Right cardiac atrium (tissue), 5 donors: ENCODE measurements at regions of chr22 and their contacts with region 1.

Region 1: DNA sequence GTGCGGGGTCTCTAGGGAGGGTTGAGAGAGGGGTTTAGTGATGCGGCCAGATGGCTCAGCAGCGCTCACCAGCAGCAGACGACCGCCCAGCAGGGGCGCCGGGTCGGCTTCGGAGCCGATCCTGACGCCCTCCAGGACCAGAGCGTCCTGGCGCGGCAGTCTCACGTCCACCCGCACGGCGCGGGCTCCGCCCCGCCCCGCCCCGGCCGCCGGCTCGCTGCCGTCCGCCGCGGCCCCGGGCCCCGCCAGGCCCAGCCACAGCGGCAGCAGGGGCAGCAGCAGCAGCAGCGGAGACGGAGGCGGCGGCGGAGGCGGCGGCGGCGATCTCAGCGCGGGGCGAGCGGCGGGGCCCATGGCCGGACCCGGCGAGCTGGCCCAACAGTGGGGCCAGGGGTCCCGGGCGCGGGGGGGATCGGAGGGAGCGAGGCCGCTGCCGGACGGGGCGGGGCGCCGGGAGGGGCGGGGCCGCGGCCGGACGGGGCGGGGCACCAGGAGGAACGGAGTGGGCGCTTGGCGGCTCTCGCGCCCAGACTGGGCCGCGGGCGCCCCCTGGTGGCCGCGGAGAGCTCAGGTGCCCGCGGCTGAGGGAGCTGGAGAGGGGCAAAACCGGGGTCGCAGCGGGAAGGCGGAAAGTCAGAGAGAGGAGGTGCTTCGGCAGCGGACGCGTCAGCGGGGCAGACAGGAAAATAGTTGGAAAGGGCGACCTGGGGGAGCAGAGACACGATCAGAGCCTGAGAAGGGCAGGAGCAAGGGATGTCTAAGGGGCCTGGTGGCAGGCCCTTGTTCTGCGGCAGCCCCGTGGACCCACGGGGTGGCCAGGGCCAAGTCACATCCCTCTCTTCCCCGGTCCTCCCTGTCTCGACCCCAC is at the start of gene RNF215:
- DNase-seq: peak; percentile 81 to 95 (median 93)
- ATAC-seq: peak; percentile 90 to 94
- H3K4me3 ChIP-seq: peak within 1 kb of the TSS; percentile 85
- H3K27ac ChIP-seq: peak within 1 kb of the TSS; percentile 69
- H3K4me1 ChIP-seq: peaks cover 2% of the 10 kb centered on the region
- H3K27me3 ChIP-seq: no peaks in the 10 kb centered on the region
- total RNA-seq, gene RNF215: 8.7 to 17.0 (median 12.7) TPM

Region 2: DNA sequence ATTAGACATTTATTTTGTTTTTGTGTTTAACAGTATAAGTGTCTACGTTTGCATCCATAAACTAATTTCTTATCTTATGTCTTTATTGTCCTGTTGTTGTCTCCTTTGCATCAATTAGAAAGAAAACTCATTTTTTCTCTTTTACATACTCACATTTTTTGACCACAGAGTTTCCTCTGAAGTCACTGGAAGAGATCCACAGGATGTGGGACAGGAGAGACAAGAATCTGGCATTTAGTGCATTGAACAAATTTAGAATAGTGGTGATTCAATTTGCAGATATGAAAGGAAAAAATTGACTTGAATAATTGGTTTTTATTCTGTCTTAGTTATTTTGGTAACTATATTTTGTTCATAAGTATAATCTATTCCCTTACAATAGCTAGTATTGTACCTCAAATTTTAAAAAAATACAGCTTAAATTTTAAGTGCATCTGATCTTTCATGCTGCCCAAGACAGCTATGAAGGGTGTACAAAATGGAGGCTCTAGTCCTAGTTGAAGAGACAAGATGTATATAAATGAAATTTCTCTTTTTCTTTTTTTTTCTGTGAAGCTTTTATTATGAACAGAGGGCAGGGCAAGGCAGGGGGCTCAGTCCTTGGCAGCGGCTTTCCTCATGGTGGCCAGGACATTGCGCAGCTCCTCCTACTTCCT is 282.6 kb before region 1 on chr22:
- intact Hi-C with region 1: loop called in 3 of 4 experiments (anchors 5 to 10 kb)
- DNase-seq: no peak
- ATAC-seq: no peak
- H3K4me3 ChIP-seq: no peak overlapping the region
- H3K27ac ChIP-seq: no peak overlapping the region
- H3K4me1 ChIP-seq: no peaks in the 10 kb centered on the region
- H3K27me3 ChIP-seq: no peaks in the 10 kb centered on the region

Region 3: GRCh38 chr22:30262917-30263741 is 124.1 kb before region 1 on chr22:
- intact Hi-C with region 1: loop called (anchors 2 to 10 kb)
- DNase-seq: peak; percentile 75 to 93 (median 88)
- ATAC-seq: peak in 1 of 2 donors; percentile 56
- H3K4me3 ChIP-seq: no peak overlapping the region
- H3K27ac ChIP-seq: no peak overlapping the region
- H3K4me1 ChIP-seq: no peaks in the 10 kb centered on the region
- H3K27me3 ChIP-seq: no peaks in the 10 kb centered on the region